AG04450 (cell line): ENCODE measurements at regions of chr20 and their contacts with region 1.

Region 1: GRCh38 chr20:43456809-43457639 is 672 bp upstream of the SRSF6 start:
- DNase-seq: peak; percentile 81
- H3K4me3 ChIP-seq: peak overlapping the region; percentile 86
- H3K27ac ChIP-seq: peak overlapping the region; percentile 99
- H3K27me3 ChIP-seq: peaks cover 10% of the 10 kb centered on the region
- CTCF ChIP-seq: no peak

Region 2: GRCh38 chr20:43331906-43332305 is 125.1 kb before region 1 on chr20:
- CTCF ChIA-PET with region 1: no interaction called
- POLR2A ChIA-PET with region 1: no interaction called
- DNase-seq: no peak
- H3K4me3 ChIP-seq: no peak overlapping the region
- H3K27ac ChIP-seq: no peak overlapping the region
- H3K27me3 ChIP-seq: no peaks in the 10 kb centered on the region
- CTCF ChIP-seq: no peak

Region 3: DNA sequence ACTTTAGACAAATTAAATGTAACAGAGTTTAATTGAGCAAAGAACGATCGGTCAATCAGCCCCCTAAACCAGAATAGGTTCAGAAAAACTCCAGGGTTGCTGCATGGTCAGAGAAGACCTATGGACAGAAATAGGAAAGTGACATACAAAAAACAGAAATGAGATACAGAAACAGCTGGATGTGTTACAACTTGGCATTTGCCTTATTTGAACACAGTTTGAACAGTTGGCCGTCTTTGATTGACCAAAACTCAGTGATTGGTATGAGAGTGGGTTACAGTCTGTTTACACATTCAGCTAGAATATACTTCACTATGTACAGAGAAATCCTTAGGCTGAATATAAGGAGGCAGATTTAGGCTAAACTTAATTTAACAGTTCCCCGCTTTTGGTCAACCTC is 20.6 kb after region 1 on chr20:
- CTCF ChIA-PET with region 1: no interaction called
- POLR2A ChIA-PET with region 1: no interaction called
- DNase-seq: no peak
- H3K4me3 ChIP-seq: no peak overlapping the region
- H3K27ac ChIP-seq: no peak overlapping the region
- H3K27me3 ChIP-seq: peaks cover 9% of the 10 kb centered on the region
- CTCF ChIP-seq: no peak

Region 4: DNA sequence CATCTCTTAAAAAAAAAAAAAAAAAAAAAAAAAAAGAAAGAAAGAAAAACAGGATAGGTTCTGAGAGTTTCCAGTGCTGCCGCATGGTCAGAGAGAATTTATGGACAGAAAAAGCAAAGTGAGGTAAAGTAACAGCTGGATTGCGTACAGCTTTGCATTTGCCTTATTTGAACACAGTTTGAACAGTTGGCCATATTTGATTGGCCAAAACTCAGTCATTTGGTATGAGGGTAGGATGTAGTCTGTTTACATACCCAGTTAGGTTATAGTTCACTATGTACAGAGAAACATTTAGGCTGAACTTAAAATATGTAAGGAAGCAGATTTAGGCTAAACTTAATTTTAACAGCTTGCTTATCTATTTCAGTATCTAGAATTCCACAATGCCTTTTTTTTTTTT is 33.0 kb after region 1 on chr20:
- CTCF ChIA-PET with region 1: interaction called, 4 read pairs
- POLR2A ChIA-PET with region 1: interaction called, 11 read pairs
- DNase-seq: peak; percentile 6
- H3K4me3 ChIP-seq: no peak overlapping the region
- H3K27ac ChIP-seq: no peak overlapping the region
- H3K27me3 ChIP-seq: no peaks in the 10 kb centered on the region
- CTCF ChIP-seq: no peak

Region 5: DNA sequence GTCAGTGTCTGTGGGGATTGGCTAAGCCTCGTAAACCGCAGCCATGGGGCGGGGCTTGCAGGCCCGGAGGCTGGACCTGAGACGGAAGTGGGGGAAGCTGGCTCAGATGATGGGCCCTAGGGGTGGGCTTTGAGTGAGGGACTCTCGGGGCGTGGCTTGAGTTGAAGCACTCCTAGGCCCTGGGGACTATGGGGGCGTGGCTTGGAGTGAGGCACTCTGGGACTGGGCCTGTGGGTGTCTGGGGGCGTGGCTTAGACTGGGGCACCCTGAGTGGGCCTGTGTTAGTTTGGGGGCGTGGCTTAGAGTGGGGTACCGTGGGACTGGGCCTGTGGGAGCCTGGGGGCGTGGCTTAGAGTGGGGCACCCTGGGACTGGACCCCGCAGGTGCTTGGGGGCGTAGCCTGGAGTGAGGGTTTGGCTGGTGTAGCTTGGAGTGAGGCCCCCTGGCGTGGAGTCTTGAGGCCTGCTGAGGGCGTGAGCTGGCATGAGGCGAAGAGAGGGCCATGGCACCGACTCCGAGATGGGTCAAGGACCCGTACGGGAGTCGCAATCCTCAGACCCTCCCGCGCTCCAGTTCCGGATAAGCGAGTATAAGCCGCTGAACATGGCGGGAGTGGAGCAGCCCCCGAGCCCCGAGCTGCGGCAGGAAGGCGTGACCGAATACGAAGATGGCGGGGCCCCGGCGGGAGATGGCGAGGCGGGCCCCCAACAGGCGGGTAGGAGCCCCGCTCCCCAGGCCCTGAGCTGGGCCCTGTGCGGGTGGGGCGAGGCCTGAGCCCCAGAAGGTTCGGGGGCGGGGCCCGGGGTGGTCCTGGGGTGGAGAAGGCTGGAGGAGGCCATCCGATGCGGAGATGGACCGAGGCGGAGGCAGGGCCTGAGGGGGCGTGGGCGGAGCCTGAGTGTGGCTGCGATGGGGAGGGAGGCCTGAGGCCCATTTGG is 57.3 kb after region 1 on chr20:
- CTCF ChIA-PET with region 1: no interaction called
- POLR2A ChIA-PET with region 1: interaction called, 31 read pairs
- DNase-seq: peak; percentile 97
- H3K4me3 ChIP-seq: peak overlapping the region; percentile 71
- H3K27ac ChIP-seq: peak overlapping the region; percentile 31
- H3K27me3 ChIP-seq: peaks cover 2% of the 10 kb centered on the region
- CTCF ChIP-seq: peak; percentile 40

Region 6: GRCh38 chr20:43691928-43692524 is 235.0 kb after region 1 on chr20:
- CTCF ChIA-PET with region 1: no interaction called
- POLR2A ChIA-PET with region 1: no interaction called
- DNase-seq: no peak
- H3K4me3 ChIP-seq: no peak overlapping the region
- H3K27ac ChIP-seq: no peak overlapping the region
- H3K27me3 ChIP-seq: no peaks in the 10 kb centered on the region
- CTCF ChIP-seq: peak; percentile 63

Region 7: DNA sequence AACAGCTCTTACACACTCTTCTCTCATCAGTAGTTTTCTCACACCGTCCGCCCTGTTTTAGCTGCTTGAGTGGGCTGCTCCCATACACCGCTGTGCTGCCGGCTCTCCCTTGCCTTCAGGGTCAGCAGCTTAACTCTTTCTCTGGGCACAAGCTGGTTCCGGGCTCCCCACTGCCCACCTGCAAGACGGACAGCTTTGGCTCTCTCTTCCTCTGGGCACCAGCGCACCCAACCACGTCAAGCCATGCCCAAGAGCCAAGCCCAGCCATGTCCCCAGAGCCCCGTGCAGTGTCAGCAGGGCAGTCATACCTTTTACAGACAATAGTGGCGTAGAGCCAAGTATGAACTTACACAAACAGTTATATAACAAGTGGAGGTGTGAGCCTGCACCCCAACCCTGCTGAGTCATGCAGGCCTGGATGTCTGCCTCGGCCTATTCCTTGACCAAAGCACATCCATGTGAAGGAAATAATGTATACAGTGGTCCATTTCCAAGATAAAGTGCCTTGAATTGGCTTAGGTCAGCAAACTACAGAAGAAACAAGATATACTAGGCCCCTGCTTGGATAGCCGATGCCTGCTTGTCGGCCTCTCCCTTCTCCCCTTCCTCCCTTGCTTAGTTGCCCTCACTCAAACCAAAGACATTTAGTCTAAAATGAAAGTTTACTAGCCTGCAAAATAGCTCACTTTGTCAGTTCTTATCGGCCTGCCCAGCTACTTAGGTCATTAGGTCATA is 640.7 kb after region 1 on chr20:
- CTCF ChIA-PET with region 1: no interaction called
- POLR2A ChIA-PET with region 1: no interaction called
- DNase-seq: no peak
- H3K4me3 ChIP-seq: no peak overlapping the region
- H3K27ac ChIP-seq: no peak overlapping the region
- H3K27me3 ChIP-seq: peaks cover 3% of the 10 kb centered on the region
- CTCF ChIP-seq: no peak